ENCODE measurements at regions of chr19 and their contacts with region 1.

Region 1: GRCh38 chr19:18419195-18419698 is at the start of gene SSBP4:
- DNase-seq: peak in 1 of 2 donors; percentile 86
- H3K4me3 ChIP-seq: peak within 1 kb of the TSS; percentile 65 to 75
- H3K27ac ChIP-seq: peak within 1 kb of the TSS; percentile 93 to 96
- H3K4me1 ChIP-seq: peaks cover 15 to 57% of the 10 kb centered on the region in 2 donors
- H3K27me3 ChIP-seq: no peaks in the 10 kb centered on the region
- CTCF ChIP-seq: peak in 1 of 3 experiments; percentile 76
- total RNA-seq, gene SSBP4: 233 TPM

Region 2: GRCh38 chr19:18109733-18110595 is 309.3 kb before region 1 on chr19:
- intact Hi-C with region 1: loop called (anchors 10 kb)
- DNase-seq: peak in 1 of 2 donors; percentile 76
- H3K4me3 ChIP-seq: peak overlapping the region; percentile 72 to 82
- H3K27ac ChIP-seq: peak overlapping the region; percentile 56 to 68
- H3K4me1 ChIP-seq: peaks cover 0 to 11% of the 10 kb centered on the region in 2 donors
- H3K27me3 ChIP-seq: no peaks in the 10 kb centered on the region
- CTCF ChIP-seq: no peak

Region 3: GRCh38 chr19:18214779-18215433 is 204.3 kb before region 1 on chr19:
- intact Hi-C with region 1: loop called (anchors 5 kb)
- DNase-seq: no peak
- H3K4me3 ChIP-seq: no peak overlapping the region
- H3K27ac ChIP-seq: no peak overlapping the region
- H3K4me1 ChIP-seq: no peaks in the 10 kb centered on the region
- H3K27me3 ChIP-seq: no peaks in the 10 kb centered on the region
- CTCF ChIP-seq: no peak

Region 4: GRCh38 chr19:18291590-18292461 is 127.4 kb before region 1 on chr19:
- intact Hi-C with region 1: loop called (anchors 5 kb)
- DNase-seq: peak; percentile 81 to 94
- H3K4me3 ChIP-seq: peak overlapping the region; percentile 72 to 86
- H3K27ac ChIP-seq: peak overlapping the region; percentile 99
- H3K4me1 ChIP-seq: peaks cover 4 to 28% of the 10 kb centered on the region in 2 donors
- H3K27me3 ChIP-seq: no peaks in the 10 kb centered on the region
- CTCF ChIP-seq: no peak

Region 5: DNA sequence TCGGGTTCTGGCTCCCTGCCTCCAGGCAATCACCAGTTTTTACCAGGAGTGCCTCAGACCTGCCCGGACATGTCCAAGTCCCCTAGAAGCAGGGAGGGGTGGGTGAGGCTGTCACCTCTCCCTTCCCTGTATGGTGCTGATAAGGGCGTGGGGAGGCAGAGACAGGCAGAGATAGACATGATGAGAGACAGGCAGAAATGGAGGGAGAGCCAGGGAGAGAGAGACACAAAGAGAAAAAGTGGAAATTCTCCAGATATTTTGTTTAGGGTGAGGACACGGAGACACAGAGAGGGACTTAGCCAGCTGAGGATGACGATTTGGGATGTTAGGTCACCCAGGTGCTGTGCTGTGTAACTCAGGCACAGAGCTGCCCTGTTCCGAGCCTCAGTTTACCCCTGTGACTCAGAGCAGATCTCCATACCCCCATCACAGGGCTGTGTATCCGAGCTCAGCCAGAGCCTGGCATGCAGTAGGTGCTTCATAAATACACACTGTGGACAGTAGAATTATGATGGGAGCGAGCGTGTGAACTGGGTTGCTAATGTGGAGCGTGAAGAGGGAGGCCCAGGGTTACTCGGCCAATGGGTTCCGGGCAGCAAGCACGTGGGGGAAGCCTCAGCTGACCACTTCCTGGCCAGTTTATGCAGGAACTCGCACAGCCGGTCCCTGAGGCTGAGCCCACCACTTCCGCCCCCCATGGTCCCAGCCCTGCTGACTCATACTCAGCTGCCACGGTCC is 45.2 kb before region 1 on chr19:
- intact Hi-C with region 1: no loop called
- DNase-seq: peak; percentile 92 to 96
- H3K4me3 ChIP-seq: no peak overlapping the region
- H3K27ac ChIP-seq: peak overlapping the region; percentile 78 to 79
- H3K4me1 ChIP-seq: peaks cover 5 to 16% of the 10 kb centered on the region in 2 donors
- H3K27me3 ChIP-seq: no peaks in the 10 kb centered on the region
- CTCF ChIP-seq: no peak

Region 6: DNA sequence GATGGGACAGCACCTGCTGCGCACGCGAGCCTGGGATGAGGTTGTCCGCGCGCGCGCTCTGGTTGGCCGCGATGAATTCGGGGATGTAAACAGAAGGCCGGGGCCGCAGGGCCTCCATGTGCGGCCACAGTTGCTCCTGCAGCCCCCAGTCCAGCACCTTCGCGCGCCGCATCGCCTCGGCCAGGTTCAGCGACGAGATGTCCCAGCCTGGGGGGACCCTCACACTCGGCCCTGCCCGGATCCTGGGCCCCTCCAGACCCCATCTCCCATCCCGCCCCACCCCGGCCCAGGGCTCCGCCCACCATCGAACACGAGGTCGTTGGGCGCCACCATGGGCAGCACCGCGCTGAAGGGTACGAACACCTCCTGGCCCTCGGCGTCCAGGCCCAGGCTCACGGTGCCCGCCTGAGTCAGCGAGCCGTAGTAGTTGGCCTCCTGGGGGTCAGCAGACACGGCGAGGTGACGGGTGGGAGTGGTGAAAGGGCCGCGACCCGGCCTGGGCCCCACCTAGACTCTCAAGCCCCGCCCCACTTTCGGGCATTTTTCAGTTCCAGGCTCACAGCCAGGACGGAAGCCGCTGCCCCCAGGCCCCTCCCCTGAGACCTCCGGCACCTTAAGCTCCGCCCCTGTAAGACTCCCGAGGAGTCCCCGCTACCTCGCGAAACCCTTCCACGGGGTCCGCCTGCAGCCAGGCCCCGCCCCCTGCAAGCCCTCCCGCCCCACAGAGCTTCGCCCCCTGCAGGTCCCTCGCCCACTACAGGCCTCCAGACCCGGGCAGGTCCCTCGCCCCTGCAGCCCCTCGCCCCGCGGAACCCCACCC is 17.6 kb after region 1 on chr19:
- intact Hi-C with region 1: loop called (anchors 2 kb)
- DNase-seq: peak in 1 of 2 donors; percentile 89
- H3K4me3 ChIP-seq: peak overlapping the region; percentile 64 to 73
- H3K27ac ChIP-seq: peak overlapping the region; percentile 65 to 86
- H3K4me1 ChIP-seq: peaks cover 16 to 36% of the 10 kb centered on the region in 2 donors
- H3K27me3 ChIP-seq: no peaks in the 10 kb centered on the region
- CTCF ChIP-seq: peak in 1 of 3 experiments; percentile 11

Measured in ascending aorta (tissue), 2 donors.